Mammary epithelial cell (primary cell): ENCODE measurements at regions of chr1 and their contacts with region 1.

Region 1: DNA sequence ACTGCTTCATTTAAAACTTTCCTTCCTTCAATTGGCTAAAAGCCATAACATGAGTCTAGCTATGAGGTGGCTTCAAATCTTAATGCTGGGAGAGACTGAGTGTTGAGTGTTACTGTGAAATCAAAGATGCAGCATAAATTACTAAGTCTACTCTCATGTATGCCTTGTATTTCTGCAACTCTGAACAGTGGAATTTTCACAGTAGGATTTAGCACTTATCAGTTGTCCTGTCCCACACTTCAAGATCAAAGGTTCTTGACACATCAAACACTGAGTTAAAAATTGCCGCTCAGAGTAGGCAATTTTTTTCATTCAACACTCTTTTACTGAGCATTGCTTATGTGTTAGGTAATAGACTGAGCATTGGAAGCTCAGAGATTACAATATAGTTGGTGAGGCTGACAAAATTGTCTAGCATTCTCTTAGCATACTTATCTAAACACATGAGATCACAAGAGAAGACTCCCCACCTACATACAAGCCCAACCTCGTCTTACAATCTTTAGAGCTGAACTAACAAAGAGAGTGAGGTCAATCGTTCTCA is 56.4 kb upstream of the ADORA3 start:
- DNase-seq: peak; percentile 44
- H3K4me3 ChIP-seq: no peak overlapping the region
- H3K27ac ChIP-seq: no peak overlapping the region
- H3K4me1 ChIP-seq: peaks cover 20% of the 10 kb centered on the region
- H3K27me3 ChIP-seq: no peaks in the 10 kb centered on the region
- CTCF ChIP-seq: no peak

Region 2: DNA sequence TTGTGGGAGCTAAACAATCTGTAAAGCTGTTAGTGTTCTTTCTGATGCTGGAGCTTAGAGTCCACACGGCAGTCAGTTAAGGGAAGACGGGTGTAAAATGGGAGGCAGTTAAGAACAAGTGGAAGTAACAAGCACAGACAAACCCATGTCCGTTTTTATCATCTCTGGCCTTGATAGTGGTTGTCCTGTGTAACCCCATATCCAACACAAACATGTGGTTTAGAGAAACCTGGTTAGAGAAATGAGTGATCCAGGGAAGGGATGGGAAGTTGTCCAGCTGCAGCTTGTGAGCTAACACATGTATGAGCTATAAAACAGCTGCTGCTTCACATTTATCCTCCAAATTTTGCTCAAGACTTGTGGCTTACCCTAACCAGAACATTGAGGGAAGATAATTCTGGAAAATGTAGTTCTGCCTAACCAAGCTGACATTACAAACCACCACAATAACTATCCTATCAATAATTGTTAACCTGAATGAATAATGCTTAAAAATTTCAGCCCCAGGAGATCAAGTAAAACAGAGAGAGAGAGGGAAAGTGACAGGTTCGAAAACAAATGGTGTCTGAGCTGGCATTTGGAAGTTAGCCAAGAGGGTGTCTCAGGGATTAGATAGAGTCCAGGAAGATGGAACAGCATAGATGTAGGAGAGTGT is 96.7 kb before region 1 on chr1:
- CTCF ChIA-PET with region 1: no interaction called
- dilution Hi-C with region 1: no loop called
- in situ Hi-C with region 1: no loop called
- intact Hi-C with region 1: no loop called
- DNase-seq: peak; percentile 19
- H3K4me3 ChIP-seq: no peak overlapping the region
- H3K27ac ChIP-seq: no peak overlapping the region
- H3K4me1 ChIP-seq: no peaks in the 10 kb centered on the region
- H3K27me3 ChIP-seq: no peaks in the 10 kb centered on the region
- CTCF ChIP-seq: no peak

Region 3: DNA sequence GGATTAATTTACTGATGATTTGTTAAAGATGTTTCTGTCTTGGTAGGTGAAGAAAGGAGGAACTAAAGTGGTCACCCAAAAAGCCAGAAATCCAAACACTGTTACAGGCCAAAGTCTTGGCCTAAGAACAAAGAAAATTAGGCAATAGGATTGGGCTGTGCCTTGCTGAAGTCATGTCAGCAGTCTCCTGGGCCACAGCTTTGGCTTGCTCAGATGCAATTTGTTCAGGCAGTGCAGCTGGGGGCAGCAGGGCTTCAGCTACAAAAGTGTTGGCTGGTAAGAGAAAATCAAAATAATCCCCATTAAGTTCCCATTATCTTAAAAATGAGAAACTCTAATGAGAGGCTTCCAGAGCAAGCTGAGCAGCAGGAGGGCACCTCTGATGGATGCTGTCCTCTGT is 45.8 kb after region 1 on chr1:
- CTCF ChIA-PET with region 1: no interaction called
- dilution Hi-C with region 1: loop called (anchors 5 kb)
- in situ Hi-C with region 1: no loop called
- intact Hi-C with region 1: no loop called
- DNase-seq: no peak
- H3K4me3 ChIP-seq: no peak overlapping the region
- H3K27ac ChIP-seq: no peak overlapping the region
- H3K4me1 ChIP-seq: peaks cover 20% of the 10 kb centered on the region
- H3K27me3 ChIP-seq: no peaks in the 10 kb centered on the region
- CTCF ChIP-seq: no peak